Sigmoid colon (tissue), 7 donors: ENCODE measurements at regions of chr1 and their contacts with region 1.

Region 1: DNA sequence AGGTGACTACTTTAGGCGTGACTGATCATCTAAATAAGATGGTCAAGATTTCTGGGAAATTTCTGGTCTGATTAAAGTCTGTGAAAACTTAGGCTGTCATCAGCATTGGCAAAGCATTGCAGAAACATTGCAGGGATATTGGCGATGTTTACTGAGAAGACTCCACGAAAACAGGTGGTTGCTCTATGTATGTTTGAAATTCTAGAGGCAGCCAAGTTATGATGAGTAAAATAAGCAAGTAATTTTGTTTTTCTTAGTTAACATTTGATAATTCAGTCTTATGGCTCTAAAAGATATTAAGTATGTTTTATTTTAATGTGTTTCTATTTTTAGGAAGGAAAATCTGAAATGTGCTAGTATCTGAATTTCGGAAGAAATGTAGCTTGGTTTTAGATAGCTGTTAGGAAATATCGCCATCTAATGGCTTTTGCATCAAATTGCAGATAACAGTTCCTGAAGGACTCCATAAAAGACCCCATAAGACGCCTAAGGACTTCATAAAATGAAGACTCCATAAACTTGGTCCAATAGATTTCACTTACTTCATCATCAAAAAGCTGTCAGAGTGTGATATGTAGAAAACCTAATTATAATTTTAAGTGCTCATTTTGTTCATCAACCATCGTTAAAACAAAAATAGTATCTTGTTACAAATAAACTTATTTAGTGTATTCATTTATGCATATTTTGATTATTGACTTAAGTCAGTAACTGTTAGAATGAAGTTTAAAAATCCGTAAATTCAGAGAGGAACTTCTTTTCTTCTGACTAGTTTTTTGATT is 344.6 kb downstream of the RYR2 start:
- DNase-seq: no peak
- H3K4me3 ChIP-seq: no peak overlapping the region
- H3K27ac ChIP-seq: no peak overlapping the region
- H3K4me1 ChIP-seq: peaks cover 0 to 10% (median 4%) of the 10 kb centered on the region in 4 donors
- H3K27me3 ChIP-seq: no peaks in the 10 kb centered on the region
- CTCF ChIP-seq: peak; percentile 16 to 74 (median 58)
- EP300 ChIP-seq: no peak
- POLR2A ChIP-seq: no peak

Region 2: DNA sequence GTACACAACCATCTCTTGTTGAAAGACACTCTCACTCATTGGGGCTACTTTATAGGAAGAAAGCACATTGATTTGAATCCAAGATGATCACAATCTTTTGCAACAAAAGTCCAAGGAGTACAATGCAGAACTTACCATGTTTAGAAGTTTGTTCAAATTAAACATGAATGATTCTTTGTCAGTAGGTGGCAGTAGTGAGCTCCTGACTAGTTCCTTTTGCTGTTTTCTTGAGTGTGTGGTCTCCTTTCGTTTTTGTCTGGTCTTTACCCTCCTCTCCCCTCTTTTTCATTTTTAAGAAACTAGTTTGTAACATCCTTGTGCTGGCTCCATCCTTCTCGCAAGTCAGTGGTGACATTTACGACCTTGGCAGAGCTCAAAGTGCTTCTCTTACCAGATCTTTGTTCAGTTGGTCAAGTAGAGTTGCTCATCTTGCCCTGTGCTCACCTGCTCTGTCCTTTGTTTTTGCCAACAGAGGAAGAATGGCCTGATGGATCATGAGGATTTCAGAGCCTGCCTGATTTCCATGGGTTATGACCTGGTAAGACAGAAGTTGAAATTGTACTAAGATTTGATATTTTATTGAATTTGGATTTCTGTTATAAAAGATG is 627.2 kb before region 1 on chr1:
- intact Hi-C with region 1: loop called (anchors 10 kb)
- DNase-seq: no peak
- H3K4me3 ChIP-seq: no peak overlapping the region
- H3K27ac ChIP-seq: no peak overlapping the region
- H3K4me1 ChIP-seq: no peaks in the 10 kb centered on the region
- H3K27me3 ChIP-seq: no peaks in the 10 kb centered on the region
- CTCF ChIP-seq: peak; percentile 18 to 61 (median 49)
- EP300 ChIP-seq: no peak
- POLR2A ChIP-seq: no peak

Region 3: DNA sequence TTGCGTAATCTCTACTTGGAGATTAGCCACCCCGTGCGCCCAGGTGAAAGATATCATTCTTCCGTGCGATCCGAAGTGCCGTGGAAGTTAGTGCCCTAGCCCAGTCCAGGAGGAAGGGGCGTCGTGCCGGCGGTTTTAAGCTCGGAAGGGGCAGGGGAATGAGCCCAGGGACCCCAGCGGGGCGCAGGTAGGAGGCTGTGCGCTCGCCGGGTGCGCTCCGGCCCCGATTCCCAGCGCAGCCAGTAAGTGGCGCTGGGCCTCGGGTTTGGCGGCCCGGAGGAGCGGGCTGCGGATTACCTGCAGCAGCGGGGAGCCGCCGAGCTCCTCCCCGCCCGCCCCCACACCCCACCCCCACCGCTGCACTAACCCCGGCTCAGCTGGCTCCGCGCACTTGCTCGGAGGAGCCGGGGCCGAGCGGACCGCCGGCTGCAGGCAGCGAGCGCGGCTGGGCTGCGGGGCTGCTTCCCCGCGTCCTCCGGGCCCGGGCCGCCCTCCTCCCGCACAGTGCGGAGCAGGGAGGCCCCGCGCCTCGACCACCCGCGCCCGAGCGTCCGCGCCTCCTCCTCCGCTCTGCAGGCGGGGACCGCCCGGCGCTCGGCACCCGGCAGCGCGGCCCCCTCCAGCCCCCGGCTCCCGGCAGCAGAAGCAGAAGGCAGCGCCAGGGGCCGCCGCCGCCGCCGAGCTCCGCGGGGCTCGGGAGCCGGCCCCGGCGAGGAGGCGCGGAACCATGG is 344.6 kb before region 1 on chr1 and contains the start of gene RYR2:
- intact Hi-C with region 1: loop called (anchors 10 kb)
- DNase-seq: no peak
- H3K4me3 ChIP-seq: peak within 1 kb of the TSS; percentile 40 to 74 (median 62)
- H3K27ac ChIP-seq: peak within 1 kb of the TSS; percentile 48 to 87 (median 82)
- H3K4me1 ChIP-seq: peaks cover 0 to 42% (median 14%) of the 10 kb centered on the region in 4 donors
- H3K27me3 ChIP-seq: peaks cover 0 to 4% (median 0%) of the 10 kb centered on the region in 3 donors
- CTCF ChIP-seq: peak in 3 of 4 experiments; percentile 18 to 71 (median 57)
- EP300 ChIP-seq: no peak
- POLR2A ChIP-seq: no peak
- total RNA-seq, gene RYR2: 6.1 to 22.4 (median 16.3) TPM